ENCODE measurements at regions of chr19 and their contacts with region 1.

Region 1: DNA sequence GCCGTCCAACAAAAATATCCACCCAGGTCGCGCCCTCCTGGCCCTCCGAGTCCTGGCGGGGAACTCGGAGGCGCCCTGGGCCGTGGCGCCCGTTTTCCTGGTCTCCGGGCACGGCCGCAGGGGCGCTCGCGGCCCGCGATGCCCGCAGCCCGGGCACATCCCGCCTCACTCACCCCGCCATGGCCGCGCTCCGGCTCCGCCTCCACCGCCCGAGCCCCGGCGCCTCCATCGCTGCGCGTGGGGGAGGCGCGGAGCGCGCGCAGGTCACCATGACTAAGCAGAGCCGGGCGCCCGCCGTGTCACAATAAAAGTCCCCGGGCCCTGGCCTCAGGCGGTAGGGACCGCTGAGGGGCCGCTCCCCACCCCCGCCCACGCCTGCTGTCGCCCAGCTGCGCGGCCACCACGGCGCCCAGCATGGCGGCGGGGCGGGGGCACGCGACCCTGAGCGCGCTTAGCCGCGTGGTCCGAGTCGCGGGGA is 593 bp downstream of the KEAP1 start:
- DNase-seq: peak; percentile 90
- ATAC-seq: peak; percentile 91
- H3K4me3 Mint-ChIP-seq: peak overlapping the region; percentile 87
- H3K27ac Mint-ChIP-seq: peak overlapping the region; percentile 90
- H3K4me1 Mint-ChIP-seq: peaks cover 23% of the 10 kb centered on the region
- H3K27me3 Mint-ChIP-seq: no peaks in the 10 kb centered on the region
- CTCF ChIP-seq: no peak

Region 2: GRCh38 chr19:10388957-10389356 is 113.6 kb before region 1 on chr19:
- CTCF ChIA-PET with region 1: no interaction called
- POLR2A ChIA-PET with region 1: no interaction called
- intact Hi-C with region 1: no loop called
- DNase-seq: peak; percentile 77
- ATAC-seq: peak; percentile 56
- H3K4me3 Mint-ChIP-seq: no peak overlapping the region
- H3K27ac Mint-ChIP-seq: peak overlapping the region; percentile 35
- H3K4me1 Mint-ChIP-seq: peaks cover 23% of the 10 kb centered on the region
- H3K27me3 Mint-ChIP-seq: no peaks in the 10 kb centered on the region
- CTCF ChIP-seq: peak; percentile 92

Region 3: DNA sequence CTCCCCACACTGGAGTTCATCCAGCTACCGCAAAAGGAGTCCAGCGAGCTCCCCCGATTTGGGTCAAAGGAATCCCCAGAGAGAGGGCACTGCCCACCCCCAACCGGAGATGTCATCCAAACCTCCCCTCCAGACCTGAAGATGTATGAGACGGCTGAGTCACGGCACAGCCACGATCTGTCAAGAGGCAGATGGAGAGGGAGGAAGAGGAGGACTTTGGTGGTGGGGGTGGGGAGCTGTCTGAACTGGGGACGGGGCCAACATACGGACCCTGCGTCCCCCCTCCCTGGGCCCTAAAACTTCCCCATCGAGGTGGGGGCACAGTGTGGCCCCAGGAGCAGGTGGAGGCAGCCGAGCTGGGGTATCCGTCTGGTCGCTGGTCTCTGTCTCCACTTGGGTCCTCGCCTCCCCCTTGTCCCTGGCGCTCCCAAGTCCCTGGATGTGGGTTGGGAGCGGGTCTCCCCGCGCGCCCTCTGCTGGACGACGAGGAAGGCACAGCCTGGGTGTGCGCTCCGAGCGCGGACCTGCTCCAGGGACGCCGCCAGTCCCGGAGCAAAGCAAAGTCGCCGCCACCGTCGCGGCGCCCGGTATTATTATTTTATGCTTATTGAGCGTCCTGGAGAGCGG is 78.4 kb before region 1 on chr19:
- CTCF ChIA-PET with region 1: no interaction called
- POLR2A ChIA-PET with region 1: interaction called, 5 read pairs
- intact Hi-C with region 1: loop called (anchors 5 kb)
- DNase-seq: no peak
- ATAC-seq: peak; percentile 9
- H3K4me3 Mint-ChIP-seq: peak overlapping the region; percentile 85
- H3K27ac Mint-ChIP-seq: peak overlapping the region; percentile 72
- H3K4me1 Mint-ChIP-seq: peaks cover 87% of the 10 kb centered on the region
- H3K27me3 Mint-ChIP-seq: peaks cover 31% of the 10 kb centered on the region
- CTCF ChIP-seq: peak; percentile 42

Region 4: DNA sequence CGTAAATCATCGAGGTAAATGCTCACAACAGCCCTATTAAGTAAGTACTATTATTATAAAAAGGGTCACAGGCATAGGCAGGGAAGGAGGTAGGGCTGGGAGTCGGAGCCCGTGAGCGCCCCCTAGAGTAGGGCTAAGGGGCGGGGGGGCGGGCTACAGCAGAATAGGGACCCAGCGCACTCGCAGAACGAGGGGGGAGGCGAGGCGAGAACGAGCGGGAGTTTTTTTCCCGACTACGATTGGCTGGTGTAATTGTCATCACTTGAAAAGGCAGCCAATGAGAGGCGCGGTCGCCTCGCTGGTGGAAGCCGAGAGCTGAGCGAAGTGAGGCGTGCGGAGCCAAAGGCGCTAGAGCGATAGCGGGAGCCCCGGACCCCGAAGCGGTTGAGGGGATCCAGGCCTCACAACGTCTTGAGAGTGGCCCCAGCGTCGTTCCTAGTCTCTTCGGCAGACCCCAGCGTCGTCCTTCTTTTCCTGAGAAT is 23.6 kb before region 1 on chr19:
- CTCF ChIA-PET with region 1: no interaction called
- POLR2A ChIA-PET with region 1: interaction called, 3 read pairs
- intact Hi-C with region 1: loop called (anchors 2 kb)
- DNase-seq: peak; percentile 59
- ATAC-seq: peak; percentile 97
- H3K4me3 Mint-ChIP-seq: peak overlapping the region; percentile 32
- H3K27ac Mint-ChIP-seq: no peak overlapping the region
- H3K4me1 Mint-ChIP-seq: peaks cover 16% of the 10 kb centered on the region
- H3K27me3 Mint-ChIP-seq: no peaks in the 10 kb centered on the region
- CTCF ChIP-seq: no peak

Region 5: DNA sequence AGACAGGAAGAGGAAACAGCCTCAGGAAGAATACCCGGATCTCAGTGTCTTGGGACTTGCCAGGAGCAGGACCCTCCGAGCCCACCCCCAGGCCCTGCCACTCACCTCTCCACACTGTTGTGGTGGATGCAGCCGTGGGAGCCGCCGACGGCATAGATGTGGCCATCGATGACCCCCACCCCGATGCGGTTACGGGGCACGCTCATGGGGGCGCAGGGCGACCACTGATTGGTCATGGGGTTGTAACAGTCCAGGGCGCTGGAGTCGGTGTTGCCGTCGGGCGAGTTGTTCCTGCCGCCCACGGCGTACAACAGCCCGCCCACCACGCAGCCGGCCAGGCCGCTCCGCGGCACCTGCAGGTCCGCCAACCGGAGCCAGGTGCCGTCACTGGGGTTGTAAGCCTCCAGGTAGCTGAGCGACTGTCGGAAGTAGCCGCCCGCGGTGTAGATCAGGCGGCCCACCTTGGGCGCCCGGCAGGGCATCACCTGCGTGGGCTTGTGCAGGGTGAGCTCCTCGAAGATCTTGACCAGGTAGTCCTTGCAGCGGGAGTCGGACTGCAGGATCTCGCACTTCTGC is 11.0 kb before region 1 on chr19:
- CTCF ChIA-PET with region 1: no interaction called
- POLR2A ChIA-PET with region 1: interaction called, 10 read pairs
- intact Hi-C with region 1: no loop called
- DNase-seq: no peak
- ATAC-seq: no peak
- H3K4me3 Mint-ChIP-seq: no peak overlapping the region
- H3K27ac Mint-ChIP-seq: no peak overlapping the region
- H3K4me1 Mint-ChIP-seq: no peaks in the 10 kb centered on the region
- H3K27me3 Mint-ChIP-seq: no peaks in the 10 kb centered on the region
- CTCF ChIP-seq: no peak

Region 6: GRCh38 chr19:10543420-10544241 is 41.1 kb after region 1 on chr19 and contains the start of gene ATG4D:
- CTCF ChIA-PET with region 1: no interaction called
- POLR2A ChIA-PET with region 1: interaction called, 6 read pairs
- intact Hi-C with region 1: loop called (anchors 1 kb)
- DNase-seq: peak; percentile 79
- ATAC-seq: peak; percentile 88
- H3K4me3 Mint-ChIP-seq: peak within 1 kb of the TSS; percentile 86
- H3K27ac Mint-ChIP-seq: peak within 1 kb of the TSS; percentile 72
- H3K4me1 Mint-ChIP-seq: peaks cover 18% of the 10 kb centered on the region
- H3K27me3 Mint-ChIP-seq: peaks cover 9% of the 10 kb centered on the region
- CTCF ChIP-seq: no peak
- total RNA-seq, gene ATG4D: 37.8 and 39.1 TPM in 2 replicates

Region 7: DNA sequence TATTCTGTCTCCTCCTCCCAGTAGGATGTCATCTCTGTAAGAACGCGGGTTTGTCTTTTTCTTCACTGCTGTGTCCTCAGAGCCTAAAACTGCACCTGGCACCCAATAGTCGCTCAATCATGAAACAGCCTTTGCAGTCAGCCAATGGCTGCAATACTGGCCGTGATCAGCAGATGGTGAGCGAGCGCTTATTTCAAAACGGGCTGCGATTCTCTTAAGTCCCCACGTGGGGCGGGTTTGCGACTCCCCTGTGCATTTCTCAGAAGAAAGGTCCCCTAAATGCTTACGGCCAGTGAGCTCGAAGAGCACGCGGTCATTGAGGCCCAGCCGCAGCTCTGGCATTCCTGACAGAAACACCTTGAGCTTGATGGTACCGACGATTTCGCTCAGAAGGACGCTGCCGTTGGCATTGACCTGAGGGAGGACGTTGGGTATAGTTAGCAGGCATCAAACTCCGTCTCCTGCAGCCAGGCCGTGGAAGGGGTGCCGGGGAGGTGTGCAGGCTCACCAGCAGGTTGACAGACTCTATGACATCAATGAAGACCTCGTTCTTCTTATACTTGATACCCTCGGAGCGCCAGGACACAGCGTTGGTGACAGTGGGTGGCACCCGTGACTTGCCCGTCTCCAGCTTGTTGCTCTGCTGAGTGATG is 78.5 kb after region 1 on chr19:
- CTCF ChIA-PET with region 1: no interaction called
- POLR2A ChIA-PET with region 1: no interaction called
- intact Hi-C with region 1: no loop called
- DNase-seq: peak; percentile 80
- ATAC-seq: peak; percentile 100
- H3K4me3 Mint-ChIP-seq: no peak overlapping the region
- H3K27ac Mint-ChIP-seq: no peak overlapping the region
- H3K4me1 Mint-ChIP-seq: peaks cover 16% of the 10 kb centered on the region
- H3K27me3 Mint-ChIP-seq: no peaks in the 10 kb centered on the region
- CTCF ChIP-seq: peak; percentile 73

Region 8: GRCh38 chr19:10612491-10613119 is 110.0 kb after region 1 on chr19:
- CTCF ChIA-PET with region 1: no interaction called
- POLR2A ChIA-PET with region 1: no interaction called
- intact Hi-C with region 1: no loop called
- DNase-seq: no peak
- ATAC-seq: no peak
- H3K4me3 Mint-ChIP-seq: no peak overlapping the region
- H3K27ac Mint-ChIP-seq: peak overlapping the region; percentile 6
- H3K4me1 Mint-ChIP-seq: peaks cover 61% of the 10 kb centered on the region
- H3K27me3 Mint-ChIP-seq: no peaks in the 10 kb centered on the region
- CTCF ChIP-seq: no peak

Region 9: DNA sequence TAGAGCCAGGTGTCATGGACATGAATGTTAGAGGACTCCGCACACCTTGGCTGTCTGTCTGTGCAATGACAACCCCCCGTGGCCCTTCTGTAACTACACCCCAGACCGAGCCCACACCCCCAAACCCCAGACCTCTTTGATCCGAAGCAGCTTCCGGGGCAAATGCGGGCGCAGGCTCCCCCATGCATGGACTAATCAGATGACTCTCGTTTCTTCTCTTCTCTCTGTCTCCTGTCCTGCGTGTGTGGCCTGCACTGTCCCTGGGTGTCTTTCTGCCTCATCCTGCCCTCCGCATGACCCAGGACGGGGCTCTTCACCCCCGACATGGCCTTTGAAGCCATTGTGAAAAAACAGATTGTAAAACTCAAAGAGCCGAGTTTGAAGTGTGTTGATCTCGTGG is 294.5 kb after region 1 on chr19:
- CTCF ChIA-PET with region 1: no interaction called
- POLR2A ChIA-PET with region 1: interaction called, 10 read pairs
- intact Hi-C with region 1: no loop called
- DNase-seq: no peak
- ATAC-seq: no peak
- H3K4me3 Mint-ChIP-seq: no peak overlapping the region
- H3K27ac Mint-ChIP-seq: peak overlapping the region; percentile 70
- H3K4me1 Mint-ChIP-seq: peaks cover 12% of the 10 kb centered on the region
- H3K27me3 Mint-ChIP-seq: no peaks in the 10 kb centered on the region
- CTCF ChIP-seq: no peak

Region 10: DNA sequence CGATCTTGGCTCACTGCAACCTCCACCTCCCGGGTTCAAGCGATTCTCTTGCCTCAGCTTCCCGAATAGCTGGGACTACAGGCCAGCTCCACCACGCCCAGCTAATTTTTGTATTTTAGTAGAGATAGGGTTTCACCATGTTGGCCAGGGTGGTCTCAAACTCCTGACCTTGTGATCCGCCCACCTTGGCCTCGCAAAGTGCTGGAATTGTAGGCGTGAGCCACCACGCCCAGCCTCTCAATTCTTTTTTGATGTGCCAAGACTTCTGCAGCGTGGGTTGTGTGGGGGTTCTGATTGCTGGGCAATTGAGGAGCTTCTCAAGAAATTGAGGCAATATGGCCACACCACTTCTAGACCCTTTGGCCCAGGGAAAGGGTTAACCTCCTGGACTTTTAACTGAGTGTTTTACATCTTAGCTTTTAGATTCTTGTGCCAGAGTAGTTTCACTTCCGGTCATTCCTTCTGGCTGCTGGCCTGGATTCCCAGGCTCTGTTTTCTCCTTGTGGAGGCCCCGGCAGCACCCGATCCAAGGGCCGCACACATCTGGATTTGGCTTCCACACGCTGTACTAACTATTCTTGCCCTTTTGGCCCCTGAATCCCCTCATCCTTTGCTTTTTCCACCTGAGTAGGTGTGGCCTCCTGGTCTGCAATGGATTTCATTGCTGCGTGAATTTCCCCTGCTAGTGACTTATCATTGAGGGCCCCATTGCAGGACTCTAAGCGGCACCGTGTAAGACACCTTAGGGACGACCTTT is 473.0 kb after region 1 on chr19:
- CTCF ChIA-PET with region 1: no interaction called
- POLR2A ChIA-PET with region 1: no interaction called
- intact Hi-C with region 1: no loop called
- DNase-seq: no peak
- ATAC-seq: no peak
- H3K4me3 Mint-ChIP-seq: no peak overlapping the region
- H3K27ac Mint-ChIP-seq: no peak overlapping the region
- H3K4me1 Mint-ChIP-seq: peaks cover 43% of the 10 kb centered on the region
- H3K27me3 Mint-ChIP-seq: no peaks in the 10 kb centered on the region
- CTCF ChIP-seq: no peak

Measured in activated B cell treated with CpG ODN at 0.5 μM for 24 hours (primary cell).